Heart left ventricle (tissue), 16 donors: ENCODE measurements at regions of chr5 and their contacts with region 1.

Region 1: DNA sequence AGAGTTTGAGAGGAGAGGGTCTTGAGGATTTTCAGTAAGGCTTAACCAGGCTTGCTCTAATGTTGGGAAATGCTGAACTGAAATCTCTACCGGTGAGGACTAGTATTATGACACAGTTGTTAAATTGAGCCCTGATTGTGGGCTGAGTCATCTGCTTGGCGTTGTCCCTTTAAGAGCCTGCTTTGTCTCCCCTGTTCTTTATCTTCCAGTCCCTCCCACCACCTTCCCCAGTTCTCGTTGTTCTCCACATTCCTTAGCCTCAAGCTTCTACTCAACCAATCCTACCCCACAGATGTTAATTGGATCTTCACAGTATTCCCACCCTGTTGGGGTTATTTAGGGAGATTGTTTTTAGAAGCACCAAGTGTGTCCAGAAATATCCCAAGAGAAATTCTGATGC is 57.6 kb downstream of the ANKRD55 start:
- DNase-seq: peak in 4 of 5 donors; percentile 35 to 49 (median 39)
- ATAC-seq: peak; percentile 53 to 90 (median 82)
- H3K4me3 ChIP-seq: no peak overlapping the region
- H3K27ac ChIP-seq: peak overlapping the region in 9 of 12 donors; percentile 11 to 66 (median 49)
- H3K4me1 ChIP-seq: peaks cover 0 to 63% (median 21%) of the 10 kb centered on the region in 12 donors
- H3K27me3 ChIP-seq: no peaks in the 10 kb centered on the region
- CTCF ChIP-seq: no peak
- POLR2A ChIP-seq: no peak

Region 2: GRCh38 chr5:56070851-56071465 is 104.5 kb before region 1 on chr5:
- intact Hi-C with region 1: loop called in 2 of 10 experiments (anchors 10 kb)
- DNase-seq: peak in 1 of 5 donors; percentile 17
- ATAC-seq: peak in 2 of 4 donors; percentile 15 to 57
- H3K4me3 ChIP-seq: peak overlapping the region in 2 of 12 donors; percentile 5 to 18
- H3K27ac ChIP-seq: peak overlapping the region; percentile 31 to 86 (median 64)
- H3K4me1 ChIP-seq: peaks cover 0 to 52% (median 26%) of the 10 kb centered on the region in 12 donors
- H3K27me3 ChIP-seq: no peaks in the 10 kb centered on the region
- CTCF ChIP-seq: no peak
- POLR2A ChIP-seq: no peak

Region 3: GRCh38 chr5:56710826-56711590 is 535.5 kb after region 1 on chr5:
- intact Hi-C with region 1: no loop called
- DNase-seq: no peak
- ATAC-seq: no peak
- H3K4me3 ChIP-seq: no peak overlapping the region
- H3K27ac ChIP-seq: no peak overlapping the region
- H3K4me1 ChIP-seq: no peaks in the 10 kb centered on the region
- H3K27me3 ChIP-seq: no peaks in the 10 kb centered on the region
- CTCF ChIP-seq: no peak
- POLR2A ChIP-seq: no peak

Region 4: GRCh38 chr5:56734091-56734694 is 558.7 kb after region 1 on chr5:
- intact Hi-C with region 1: no loop called
- DNase-seq: no peak
- ATAC-seq: no peak
- H3K4me3 ChIP-seq: no peak overlapping the region
- H3K27ac ChIP-seq: no peak overlapping the region
- H3K4me1 ChIP-seq: peaks cover 0 to 50% (median 22%) of the 10 kb centered on the region in 12 donors
- H3K27me3 ChIP-seq: no peaks in the 10 kb centered on the region
- CTCF ChIP-seq: no peak
- POLR2A ChIP-seq: no peak